Common myeloid progenitor, CD34-positive (primary cell): ENCODE measurements at regions of chr16 and their contacts with region 1.

Region 1: DNA sequence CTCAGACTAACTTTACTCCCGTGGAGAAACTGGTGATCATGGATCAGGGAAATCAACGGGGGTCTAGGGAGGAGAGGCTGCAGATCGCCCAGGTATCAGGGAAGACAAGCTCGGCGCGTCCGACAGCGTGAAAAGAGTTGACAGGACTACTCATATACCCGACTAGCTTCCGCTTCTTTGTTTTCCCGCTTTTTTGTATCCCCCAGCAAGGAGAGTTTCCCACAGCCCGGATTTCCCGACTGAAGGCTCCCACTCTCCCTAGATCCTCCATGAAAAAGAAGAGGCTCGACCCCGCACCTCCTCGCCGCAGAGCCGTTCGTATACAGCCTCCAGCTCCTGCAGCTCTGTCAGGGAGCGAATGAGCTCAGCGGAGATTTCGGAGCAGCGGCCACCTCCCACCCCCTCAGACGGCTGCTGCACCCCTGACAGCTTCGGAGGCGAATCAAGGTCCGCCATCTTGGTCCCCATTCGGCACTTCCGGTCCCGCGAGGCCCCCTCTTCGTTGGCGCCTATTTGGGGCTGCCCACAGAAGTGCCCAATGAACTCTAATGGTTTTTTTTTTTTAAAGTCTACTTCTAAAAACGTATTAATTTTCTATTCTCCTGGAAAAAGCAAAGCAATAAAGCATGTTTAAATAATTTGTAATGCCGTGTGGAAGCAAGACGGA is at the start of gene COG4:
- DNase-seq: peak; percentile 93 to 95 (median 95)
- H3K4me3 ChIP-seq: peak within 1 kb of the TSS; percentile 86 to 98 (median 90)
- H3K27ac ChIP-seq: peak within 1 kb of the TSS; percentile 96 to 98
- H3K4me1 ChIP-seq: peaks cover 13 to 57% (median 36%) of the 10 kb centered on the region in 4 experiments
- H3K27me3 ChIP-seq: no peaks in the 10 kb centered on the region

Region 2: GRCh38 chr16:70508752-70509151 is 14.5 kb before region 1 on chr16:
- CTCF ChIA-PET with region 1: interaction called, 10 read pairs
- POLR2A ChIA-PET with region 1: interaction called, 4 read pairs
- DNase-seq: peak; percentile 40 to 65 (median 60)
- H3K4me3 ChIP-seq: peak overlapping the region in 1 of 7 experiments; percentile 48
- H3K27ac ChIP-seq: no peak overlapping the region
- H3K4me1 ChIP-seq: peaks cover 0 to 7% (median 2%) of the 10 kb centered on the region in 4 experiments
- H3K27me3 ChIP-seq: no peaks in the 10 kb centered on the region